AG04449 (cell line): ENCODE measurements at regions of chr1 and their contacts with region 1.

Region 1: DNA sequence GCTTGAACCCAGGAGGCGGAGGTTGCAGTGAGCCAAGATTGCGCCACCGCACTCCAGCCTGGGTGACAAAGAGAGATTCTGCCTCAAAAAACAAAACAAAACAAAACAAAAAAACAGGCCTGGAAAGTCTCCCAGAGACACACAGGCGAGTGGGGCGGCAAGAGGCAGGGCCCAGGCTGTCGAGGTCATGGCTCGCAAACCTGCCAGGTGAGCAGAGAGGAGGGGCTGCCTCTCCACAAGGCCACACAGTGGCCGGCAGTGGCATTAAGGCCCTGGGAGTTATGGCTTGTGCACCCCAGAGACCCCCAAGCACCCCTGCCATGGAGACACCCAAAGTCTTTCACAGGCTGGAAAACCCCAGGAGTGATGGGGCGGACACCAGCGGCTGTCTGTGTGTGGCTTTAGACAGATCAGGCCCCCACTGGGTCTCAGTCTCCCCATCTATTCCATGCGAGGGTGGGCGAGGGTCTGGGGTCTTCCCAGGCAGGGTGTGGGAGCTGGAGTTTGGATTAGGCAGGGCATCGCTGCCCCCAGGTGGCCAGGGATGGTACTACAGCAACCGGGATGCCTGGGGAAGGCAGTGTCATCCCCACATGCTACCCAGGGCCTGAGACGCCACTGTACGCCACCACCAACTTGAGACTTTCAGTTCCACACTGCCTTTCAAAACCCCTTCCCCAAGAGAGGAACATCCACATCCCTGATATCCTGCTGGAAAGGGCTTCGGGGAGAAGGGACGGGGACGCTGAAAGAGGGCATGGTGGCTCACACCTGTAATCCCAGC is 7.3 kb upstream of the CTRC start:
- DNase-seq: no peak
- H3K4me3 ChIP-seq: no peak overlapping the region
- CTCF ChIP-seq: peak; percentile 93

Region 2: GRCh38 chr1:15337656-15338402 is 93.2 kb before region 1 on chr1:
- CTCF ChIA-PET with region 1: interaction called, 20 read pairs
- POLR2A ChIA-PET with region 1: no interaction called
- DNase-seq: no peak
- H3K4me3 ChIP-seq: no peak overlapping the region
- CTCF ChIP-seq: no peak

Region 3: GRCh38 chr1:15409388-15410222 is 21.4 kb before region 1 on chr1 and contains the start of gene EFHD2:
- CTCF ChIA-PET with region 1: interaction called, 19 read pairs
- POLR2A ChIA-PET with region 1: interaction called, 4 read pairs
- DNase-seq: no peak
- H3K4me3 ChIP-seq: peak within 1 kb of the TSS; percentile 83
- CTCF ChIP-seq: no peak

Region 4: DNA sequence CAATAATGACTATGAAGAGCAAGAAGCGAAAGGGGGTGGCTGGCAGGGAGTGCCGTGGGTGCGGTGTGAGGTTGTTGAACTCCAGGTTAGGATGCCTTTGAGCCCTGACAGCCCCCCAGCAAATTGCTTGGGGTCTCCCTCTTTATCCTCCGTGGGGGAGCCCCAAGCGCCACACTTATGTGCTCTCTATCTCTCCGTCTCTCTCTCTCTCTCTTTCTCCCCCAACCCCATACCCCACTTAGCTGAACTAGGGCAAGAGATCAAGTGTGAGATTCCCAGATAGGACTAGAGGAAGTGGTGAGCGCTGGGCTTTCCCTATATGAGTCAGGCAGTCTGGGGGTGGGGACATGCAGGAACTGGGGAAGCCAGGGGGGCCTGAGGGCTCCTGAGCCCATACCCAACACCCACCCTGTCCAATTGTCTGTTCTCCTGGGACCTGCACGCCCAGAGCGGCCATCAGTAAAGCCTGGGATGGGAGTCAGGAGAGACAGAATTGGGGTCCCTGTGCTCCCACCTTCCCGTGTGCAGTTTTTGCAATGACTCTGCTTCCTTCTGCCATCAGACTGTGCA is 13.5 kb before region 1 on chr1:
- CTCF ChIA-PET with region 1: interaction called, 52 read pairs
- POLR2A ChIA-PET with region 1: interaction called, 4 read pairs
- DNase-seq: no peak
- H3K4me3 ChIP-seq: no peak overlapping the region
- CTCF ChIP-seq: no peak

Region 5: DNA sequence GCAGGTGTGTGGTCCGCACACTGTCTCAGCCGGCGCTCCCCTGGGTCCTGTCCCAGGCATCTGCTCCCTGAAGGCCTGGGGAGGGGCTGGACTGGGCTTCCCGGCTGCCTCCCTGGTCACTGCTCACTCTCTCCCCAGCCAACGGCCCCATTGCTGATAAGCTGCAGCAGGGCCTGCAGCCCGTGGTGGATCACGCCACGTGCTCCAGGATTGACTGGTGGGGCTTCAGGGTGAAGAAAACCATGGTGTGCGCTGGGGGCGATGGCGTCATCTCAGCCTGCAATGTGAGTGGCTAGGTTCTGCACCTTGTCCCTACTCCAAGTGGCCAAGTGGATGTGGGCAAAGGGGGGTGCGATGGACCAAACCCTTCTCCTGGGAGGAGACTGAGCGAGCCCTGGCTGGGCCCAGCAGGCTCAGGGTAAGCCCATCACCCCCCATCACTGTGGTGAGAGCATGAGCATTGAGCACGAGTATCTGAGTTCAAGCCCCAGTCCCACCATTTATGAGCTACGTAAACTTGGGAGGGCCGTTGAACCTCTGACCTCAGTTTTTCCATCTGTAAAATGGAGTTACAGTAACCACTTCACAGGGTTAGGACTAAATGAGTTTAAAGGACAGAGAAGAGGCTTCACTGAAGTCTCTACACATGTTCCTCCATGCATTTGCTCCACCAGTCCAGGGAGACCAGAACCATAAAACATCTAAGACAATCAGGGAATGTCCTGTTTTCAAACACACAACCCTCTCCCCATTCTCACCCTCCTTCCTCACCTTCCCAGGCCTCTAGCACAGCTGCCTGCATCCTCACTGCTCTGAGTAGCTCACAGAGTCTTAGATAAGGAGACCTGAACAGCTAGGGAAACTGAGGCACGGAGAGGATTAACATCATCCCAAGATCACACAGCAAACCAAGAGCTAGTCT is 13.8 kb after region 1 on chr1:
- CTCF ChIA-PET with region 1: interaction called, 31 read pairs
- POLR2A ChIA-PET with region 1: no interaction called
- DNase-seq: no peak
- H3K4me3 ChIP-seq: no peak overlapping the region
- CTCF ChIP-seq: no peak